H1 (cell line): ENCODE measurements at regions of chr6 and their contacts with region 1.

Region 1: DNA sequence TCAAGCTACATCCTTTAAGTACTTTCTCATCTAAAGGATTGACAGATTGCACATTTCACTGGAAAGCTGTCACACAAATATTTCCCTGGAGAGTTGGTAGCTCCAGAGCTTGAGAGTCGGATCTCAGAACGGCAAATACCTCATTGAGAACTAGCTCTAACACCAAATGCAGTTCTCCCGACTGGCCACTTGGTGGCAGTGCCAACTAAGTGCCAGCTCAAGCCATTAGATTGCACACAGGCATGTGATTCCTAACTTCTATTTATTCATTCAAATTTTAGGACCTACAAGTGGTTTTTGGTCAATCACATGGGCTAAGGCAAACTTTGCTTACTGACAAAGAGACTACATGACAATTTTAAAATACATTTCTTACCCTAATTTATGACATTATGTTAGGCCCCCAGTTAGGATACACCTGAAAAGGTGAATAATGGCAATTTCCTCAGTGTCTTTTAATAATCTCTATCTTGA is 7.9 kb upstream of the MCHR2 start:
- DNase-seq: no peak
- H3K4me3 ChIP-seq: no peak overlapping the region
- H3K27ac ChIP-seq: no peak overlapping the region
- H3K4me1 ChIP-seq: no peaks in the 10 kb centered on the region
- H3K27me3 ChIP-seq: no peaks in the 10 kb centered on the region
- CTCF ChIP-seq: peak; percentile 75 to 94 (median 84)
- EP300 ChIP-seq: no peak
- POLR2A ChIP-seq: no peak
- RAD21 ChIP-seq: peak; percentile 86 to 88

Region 2: GRCh38 chr6:99905209-99906106 is 96.5 kb before region 1 on chr6:
- CTCF ChIA-PET with region 1: interaction called, 15 read pairs
- POLR2A ChIA-PET with region 1: no interaction called
- DNase-seq: peak in 1 of 2 experiments; percentile 5
- H3K4me3 ChIP-seq: no peak overlapping the region
- H3K27ac ChIP-seq: no peak overlapping the region
- H3K4me1 ChIP-seq: no peaks in the 10 kb centered on the region
- H3K27me3 ChIP-seq: no peaks in the 10 kb centered on the region
- CTCF ChIP-seq: peak in 2 of 3 experiments; percentile 71 to 98; a peak in 3 of 4 replicates
- EP300 ChIP-seq: no peak
- POLR2A ChIP-seq: no peak
- RAD21 ChIP-seq: peak; percentile 78 to 80

Region 3: GRCh38 chr6:99933129-99933528 is 68.8 kb before region 1 on chr6:
- CTCF ChIA-PET with region 1: no interaction called
- POLR2A ChIA-PET with region 1: no interaction called
- DNase-seq: no peak
- H3K4me3 ChIP-seq: no peak overlapping the region
- H3K27ac ChIP-seq: no peak overlapping the region
- H3K4me1 ChIP-seq: no peaks in the 10 kb centered on the region
- H3K27me3 ChIP-seq: no peaks in the 10 kb centered on the region
- CTCF ChIP-seq: no peak
- EP300 ChIP-seq: no peak
- POLR2A ChIP-seq: no peak
- RAD21 ChIP-seq: no peak

Region 4: DNA sequence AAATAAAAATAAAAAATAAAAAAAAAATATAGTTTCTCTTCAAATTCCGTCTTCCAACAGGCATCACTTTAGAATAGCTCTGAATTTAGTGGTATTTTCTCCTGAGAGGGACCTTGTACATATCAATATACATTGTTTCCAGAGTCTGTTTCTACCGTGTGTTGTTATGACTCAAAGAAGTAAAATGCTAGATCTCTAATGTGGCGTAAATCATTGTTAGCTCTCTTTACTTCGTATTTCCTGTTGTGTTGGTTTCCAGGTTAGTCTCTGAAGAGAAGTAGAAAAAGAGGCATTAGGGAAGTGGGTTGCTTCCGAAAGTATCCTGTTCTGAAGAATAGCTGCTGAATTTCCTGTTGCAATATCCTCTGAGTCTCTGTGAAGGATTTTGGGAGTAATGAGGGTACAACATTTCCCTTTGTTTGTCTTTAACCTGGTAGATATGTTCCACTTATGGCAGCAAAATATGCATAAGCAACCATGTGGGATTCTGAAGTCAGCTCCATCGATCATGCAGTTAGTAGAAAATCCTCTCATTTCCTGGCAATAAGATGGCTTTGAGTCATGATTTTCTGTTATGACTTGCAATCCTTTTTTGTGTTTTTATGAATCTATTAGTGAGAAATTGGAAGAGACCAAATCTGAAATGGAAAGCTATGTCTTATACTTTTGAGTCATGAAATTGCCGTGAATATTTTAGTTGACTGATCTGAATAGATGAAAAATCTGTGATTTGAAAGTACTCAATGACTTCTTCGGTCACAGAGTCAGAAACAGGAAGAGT is 34.1 kb after region 1 on chr6:
- CTCF ChIA-PET with region 1: interaction called, 16 read pairs
- POLR2A ChIA-PET with region 1: no interaction called
- DNase-seq: no peak
- H3K4me3 ChIP-seq: no peak overlapping the region
- H3K27ac ChIP-seq: no peak overlapping the region
- H3K4me1 ChIP-seq: no peaks in the 10 kb centered on the region
- H3K27me3 ChIP-seq: peaks cover 0 to 2% (median 0%) of the 10 kb centered on the region in 4 experiments; a peak in 1 of 7 replicates
- CTCF ChIP-seq: no peak
- EP300 ChIP-seq: no peak
- POLR2A ChIP-seq: no peak
- RAD21 ChIP-seq: no peak

Region 5: GRCh38 chr6:100078509-100078908 is 76.6 kb after region 1 on chr6:
- CTCF ChIA-PET with region 1: interaction called, 13 read pairs
- POLR2A ChIA-PET with region 1: no interaction called
- DNase-seq: peak; percentile 19 to 51
- H3K4me3 ChIP-seq: no peak overlapping the region
- H3K27ac ChIP-seq: no peak overlapping the region
- H3K4me1 ChIP-seq: no peaks in the 10 kb centered on the region
- H3K27me3 ChIP-seq: no peaks in the 10 kb centered on the region
- CTCF ChIP-seq: peak; percentile 62 to 79 (median 70)
- EP300 ChIP-seq: no peak
- POLR2A ChIP-seq: no peak
- RAD21 ChIP-seq: peak; percentile 64 to 70

Region 6: DNA sequence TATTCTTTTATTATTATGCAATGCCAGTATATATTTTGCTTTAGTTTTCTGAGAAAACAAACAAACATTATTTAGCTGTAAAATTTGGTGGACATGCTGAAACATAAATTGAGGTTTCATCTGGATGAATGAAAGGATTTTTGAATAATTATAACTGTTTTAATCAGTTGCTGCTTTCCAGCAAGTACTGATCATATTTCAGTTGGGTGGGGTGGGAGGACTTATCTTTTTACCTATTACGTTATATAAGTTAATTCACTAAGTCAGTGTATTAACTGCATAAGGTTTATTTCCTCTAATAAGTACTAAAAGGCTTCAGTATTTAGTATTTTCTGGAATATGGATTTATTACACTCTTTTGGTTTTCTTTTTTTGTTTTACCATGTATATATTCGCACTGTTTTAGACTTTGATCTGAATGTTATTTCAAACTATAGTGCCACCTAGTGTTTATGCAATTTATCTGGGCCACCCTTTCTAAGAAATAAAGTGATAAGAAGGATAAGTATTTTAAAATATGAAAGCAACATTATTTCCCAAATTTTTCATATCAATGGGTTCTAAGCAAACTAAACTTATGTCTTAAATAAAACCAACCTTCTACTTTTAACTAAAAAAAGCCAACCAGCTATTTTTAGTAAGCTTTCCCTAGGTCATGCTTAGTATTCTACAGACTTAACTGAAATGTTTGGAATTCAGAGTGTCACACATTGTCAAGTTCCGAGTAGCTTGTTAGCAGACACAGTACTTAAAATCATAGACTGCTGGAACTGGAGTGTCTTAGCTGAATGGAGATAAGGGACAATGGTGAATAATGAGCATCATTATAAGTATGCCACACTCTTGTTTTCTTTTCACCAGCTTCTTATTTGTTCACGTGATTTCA is 97.5 kb after region 1 on chr6:
- CTCF ChIA-PET with region 1: interaction called, 55 read pairs
- POLR2A ChIA-PET with region 1: no interaction called
- DNase-seq: no peak
- H3K4me3 ChIP-seq: no peak overlapping the region
- H3K27ac ChIP-seq: no peak overlapping the region
- H3K4me1 ChIP-seq: no peaks in the 10 kb centered on the region
- H3K27me3 ChIP-seq: no peaks in the 10 kb centered on the region
- CTCF ChIP-seq: peak in 2 of 3 experiments; percentile 18 to 29; a peak in 2 of 4 replicates
- EP300 ChIP-seq: no peak
- POLR2A ChIP-seq: no peak
- RAD21 ChIP-seq: peak in 1 of 2 experiments; percentile 44; a peak in 3 of 4 replicates

Region 7: DNA sequence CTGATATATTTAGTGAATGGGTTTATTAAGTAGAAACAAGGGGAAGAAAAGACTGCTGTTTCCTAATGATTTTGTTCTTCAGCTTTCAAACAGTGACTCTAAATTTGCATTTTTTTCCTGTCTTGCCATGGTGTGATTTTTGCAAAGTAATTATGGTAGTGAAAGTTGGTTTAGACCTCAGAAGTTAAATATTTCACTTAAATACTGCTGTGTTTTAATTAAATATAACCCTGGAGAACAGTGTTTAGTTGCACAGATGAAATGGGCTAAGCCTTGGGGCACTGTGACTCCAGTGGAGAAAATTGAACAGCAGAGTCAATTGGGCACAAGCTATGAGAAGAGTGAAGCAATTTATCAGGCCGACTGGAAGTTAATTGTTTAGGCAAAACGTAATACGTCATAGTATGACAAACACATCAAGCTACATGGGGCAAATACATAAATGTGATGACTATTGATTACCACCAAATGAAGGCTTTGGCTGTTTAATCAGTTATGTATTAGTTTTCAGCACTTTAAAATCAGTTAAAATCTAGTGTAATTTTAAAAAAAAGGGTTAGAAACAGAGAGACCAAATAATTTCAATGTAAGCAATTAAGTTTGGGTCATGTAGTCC is 103.3 kb after region 1 on chr6:
- CTCF ChIA-PET with region 1: interaction called, 55 read pairs
- POLR2A ChIA-PET with region 1: no interaction called
- DNase-seq: no peak
- H3K4me3 ChIP-seq: no peak overlapping the region
- H3K27ac ChIP-seq: no peak overlapping the region
- H3K4me1 ChIP-seq: no peaks in the 10 kb centered on the region
- H3K27me3 ChIP-seq: no peaks in the 10 kb centered on the region
- CTCF ChIP-seq: no peak
- EP300 ChIP-seq: no peak
- POLR2A ChIP-seq: no peak
- RAD21 ChIP-seq: no peak